AG04449 (cell line): ENCODE measurements at regions of chr9 and their contacts with region 1.

Region 1: GRCh38 chr9:122078557-122078956 is 14.6 kb downstream of the TTLL11 start:
- DNase-seq: no peak
- H3K4me3 ChIP-seq: no peak overlapping the region
- CTCF ChIP-seq: no peak

Region 2: GRCh38 chr9:122092611-122093506 is 14.3 kb after region 1 on chr9 and contains the start of gene TTLL11:
- CTCF ChIA-PET with region 1: interaction called, 16 read pairs
- POLR2A ChIA-PET with region 1: interaction called, 3 read pairs
- DNase-seq: peak; percentile 49
- H3K4me3 ChIP-seq: peak within 1 kb of the TSS; percentile 79
- CTCF ChIP-seq: no peak